ENCODE measurements at regions of chr16 and their contacts with region 1.

Region 1: DNA sequence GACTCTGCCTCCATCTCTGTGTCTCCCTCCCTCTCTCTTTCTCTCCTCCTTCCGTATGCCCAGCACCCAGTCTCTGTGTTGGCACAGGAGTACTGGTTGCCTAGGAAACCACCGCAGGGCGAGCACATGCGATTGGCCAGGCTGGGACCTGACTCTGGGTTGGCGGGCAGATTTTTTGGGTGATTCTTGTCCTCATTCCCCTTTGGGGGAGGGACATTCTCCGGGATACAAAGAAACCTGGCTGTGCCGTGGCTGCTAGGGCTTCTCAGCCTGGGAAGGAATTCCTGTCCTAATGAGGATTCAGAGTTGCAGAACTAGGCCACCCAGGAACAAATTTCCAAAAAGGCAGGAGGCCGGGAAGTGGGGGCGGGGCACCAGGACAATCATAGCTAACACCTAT is 168.9 kb downstream of the SHISA9 start:
- DNase-seq: no peak
- H3K4me3 ChIP-seq: no peak overlapping the region
- H3K27ac ChIP-seq: no peak overlapping the region
- H3K4me1 ChIP-seq: no peaks in the 10 kb centered on the region
- CTCF ChIP-seq: no peak

Region 2: GRCh38 chr16:13021996-13022395 is 48.3 kb before region 1 on chr16:
- CTCF ChIA-PET with region 1: no interaction called
- POLR2A ChIA-PET with region 1: no interaction called
- intact Hi-C with region 1: no loop called
- DNase-seq: no peak
- H3K4me3 ChIP-seq: no peak overlapping the region
- H3K27ac ChIP-seq: no peak overlapping the region
- H3K4me1 ChIP-seq: no peaks in the 10 kb centered on the region
- CTCF ChIP-seq: no peak

Region 3: GRCh38 chr16:13402601-13403000 is 332.3 kb after region 1 on chr16:
- CTCF ChIA-PET with region 1: no interaction called
- POLR2A ChIA-PET with region 1: interaction called, 10 read pairs
- intact Hi-C with region 1: no loop called
- DNase-seq: no peak
- H3K4me3 ChIP-seq: no peak overlapping the region
- H3K27ac ChIP-seq: no peak overlapping the region
- H3K4me1 ChIP-seq: no peaks in the 10 kb centered on the region
- CTCF ChIP-seq: no peak

Measured in OCI-LY7 (cell line).